ENCODE measurements at regions of chr7 and their contacts with region 1.

Region 1: DNA sequence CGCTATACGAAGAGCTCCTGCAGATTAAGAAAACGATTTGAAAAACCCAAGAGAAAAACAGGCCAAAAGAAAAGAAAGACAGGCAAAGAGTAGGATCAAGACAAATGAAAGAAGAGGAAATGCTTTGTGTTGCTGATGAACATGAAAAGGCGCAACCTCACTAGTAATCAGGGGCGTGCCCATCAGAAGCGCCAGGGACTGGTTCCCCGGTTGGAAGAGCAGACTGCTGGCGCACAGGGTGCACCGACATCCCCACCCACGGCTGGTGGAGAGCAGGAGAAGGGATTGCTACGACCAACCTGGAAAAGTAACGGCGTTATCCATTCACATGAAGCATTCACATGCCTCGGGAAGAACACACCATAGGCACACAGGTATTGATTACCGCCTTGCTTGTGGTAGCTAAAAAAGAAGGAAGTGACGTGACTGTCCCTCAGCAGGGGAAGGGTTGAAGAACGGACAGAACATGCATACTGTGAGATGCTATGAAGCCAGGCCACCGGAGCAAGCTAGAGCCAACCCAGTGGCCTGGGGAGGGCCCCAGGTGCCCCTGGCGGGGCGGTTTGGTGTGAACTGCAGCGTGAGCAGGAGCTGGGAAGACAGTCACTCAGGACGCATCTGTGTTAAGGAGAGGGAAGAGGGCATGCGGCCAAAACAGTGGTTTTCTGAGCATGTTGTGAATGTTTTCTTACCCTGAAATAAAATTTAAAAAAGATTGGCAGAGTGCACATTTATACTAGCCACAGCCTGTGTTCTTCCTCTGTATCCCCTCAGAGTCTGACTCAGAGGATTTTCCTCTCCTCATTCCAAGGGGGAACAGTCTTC is 18.3 kb downstream of the AGAP3 start:
- DNase-seq: peak; percentile 39 to 84 (median 79)
- H3K4me3 ChIP-seq: peak overlapping the region in 1 of 7 experiments; percentile 42
- H3K27ac ChIP-seq: peak overlapping the region in 1 of 2 experiments; percentile 4
- H3K4me1 ChIP-seq: peaks cover 0 to 25% (median 12%) of the 10 kb centered on the region in 4 experiments
- H3K27me3 ChIP-seq: no peaks in the 10 kb centered on the region

Region 2: DNA sequence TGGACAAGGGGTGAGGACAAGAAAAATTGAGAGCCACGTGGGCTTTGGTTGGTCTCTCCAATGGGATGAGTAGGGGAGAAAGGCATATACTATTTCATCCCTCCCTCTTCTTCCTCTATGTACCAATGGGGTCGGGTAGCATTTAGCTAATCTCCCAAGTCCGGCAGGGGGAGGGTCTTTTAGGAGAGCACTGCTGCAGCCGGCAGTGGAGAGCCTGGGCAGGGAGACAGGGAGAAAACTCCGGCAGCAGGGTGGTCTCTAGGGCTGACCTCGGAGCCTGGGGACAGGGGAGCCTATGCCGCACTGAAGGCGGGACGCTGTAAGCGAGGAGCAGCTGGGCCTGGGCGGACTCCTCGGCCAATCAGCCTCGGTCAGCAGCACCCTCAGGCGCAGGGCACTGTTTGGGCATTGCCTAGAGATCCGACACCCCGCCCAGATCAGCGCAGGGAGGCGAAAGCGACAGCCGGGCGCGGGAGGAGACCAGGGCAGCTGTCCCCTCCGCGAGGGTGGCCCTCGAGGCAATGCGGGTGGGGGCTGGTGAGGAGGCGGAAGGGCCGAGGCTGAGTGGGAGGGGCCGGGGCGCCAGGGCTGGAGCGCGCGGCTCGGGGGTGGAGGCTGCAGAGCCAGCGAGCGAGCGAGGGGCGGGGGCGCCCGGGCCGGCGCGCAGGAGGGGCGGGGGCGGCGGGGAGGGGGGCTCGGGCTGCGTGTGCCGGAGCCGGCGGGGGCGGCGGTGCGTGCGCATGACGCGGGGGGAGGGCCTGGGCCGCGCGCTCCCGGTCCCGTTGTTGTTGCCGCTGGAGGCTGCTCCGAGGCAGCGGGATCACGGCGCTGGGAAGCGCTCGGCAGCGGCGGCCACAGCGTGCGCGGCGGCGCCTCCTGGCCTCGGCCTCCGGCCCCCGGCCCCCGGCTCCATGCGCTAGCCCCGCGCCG is 18.7 kb before region 1 on chr7 and contains the start of gene AGAP3:
- CTCF ChIA-PET with region 1: interaction called, 219 read pairs
- POLR2A ChIA-PET with region 1: interaction called, 11 read pairs
- DNase-seq: peak in 2 of 3 donors; percentile 39 to 55
- H3K4me3 ChIP-seq: peak within 1 kb of the TSS; percentile 52 to 87 (median 79)
- H3K27ac ChIP-seq: peak within 1 kb of the TSS in 1 of 2 experiments; percentile 88
- H3K4me1 ChIP-seq: peaks cover 9 to 73% (median 67%) of the 10 kb centered on the region in 4 experiments
- H3K27me3 ChIP-seq: no peaks in the 10 kb centered on the region

Measured in common myeloid progenitor, CD34-positive (primary cell).